A549 (cell line): ENCODE measurements at regions of chr11 and their contacts with region 1.

Region 1: DNA sequence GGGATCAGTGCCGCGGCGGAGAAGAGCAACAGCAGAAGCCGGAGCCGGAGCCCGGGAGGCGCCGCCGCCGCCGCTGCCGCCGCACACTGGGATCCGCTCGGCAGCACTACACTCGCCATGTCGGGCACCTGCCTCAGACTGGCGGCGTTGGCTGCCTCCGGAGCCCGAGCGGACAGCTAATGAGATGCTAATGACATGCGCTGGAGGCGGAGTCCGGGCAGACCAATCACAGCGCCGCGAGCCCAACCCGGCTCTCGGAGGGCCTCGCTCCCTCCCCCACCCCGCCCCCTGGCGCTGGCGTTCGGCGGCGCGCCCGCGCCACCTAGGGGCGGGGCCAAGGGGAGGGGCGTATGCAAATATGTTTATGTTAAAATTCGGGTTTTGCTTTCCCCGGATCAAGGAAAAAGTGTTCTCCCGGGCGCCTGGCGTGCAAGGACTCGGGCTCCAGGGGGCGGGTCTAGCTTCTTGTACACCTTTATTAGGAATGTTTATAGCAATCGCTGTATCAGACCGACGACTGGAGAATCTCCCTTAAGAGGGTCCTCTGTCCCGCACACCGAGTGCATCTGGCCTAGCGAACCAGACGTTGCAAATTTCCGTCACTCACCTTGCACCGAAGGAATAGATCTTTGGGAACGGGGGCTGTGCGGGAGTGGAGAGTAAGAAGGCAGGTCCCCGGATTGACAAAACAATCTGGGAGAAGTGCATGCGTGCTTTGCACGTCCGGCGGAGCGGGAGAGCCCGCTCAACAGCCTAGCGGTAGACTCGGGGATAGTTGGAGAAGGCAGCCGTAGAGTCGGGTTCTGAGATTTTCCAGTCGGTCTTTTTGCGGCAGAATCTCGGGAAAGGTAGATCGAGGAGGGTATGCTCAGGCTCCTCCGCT is at the start of gene CADM1:
- DNase-seq: peak; percentile 70 to 92
- ATAC-seq: peak; percentile 89 to 95
- H3K4me3 ChIP-seq: peak within 1 kb of the TSS; percentile 92
- H3K27ac ChIP-seq: peak within 1 kb of the TSS; percentile 86 to 95
- H3K4me1 ChIP-seq: peaks cover 12% of the 10 kb centered on the region; the same call in 2 of the 3 replicates
- CTCF ChIP-seq: peak; percentile 13
- EP300 ChIP-seq: no peak
- POLR2A ChIP-seq: peak; percentile 93
- RAD21 ChIP-seq: peak; percentile 10 to 32; a peak in 3 of 5 replicates
- polyA plus RNA-seq, gene CADM1: 36.7 and 59.0 TPM in 2 replicates

Region 2: DNA sequence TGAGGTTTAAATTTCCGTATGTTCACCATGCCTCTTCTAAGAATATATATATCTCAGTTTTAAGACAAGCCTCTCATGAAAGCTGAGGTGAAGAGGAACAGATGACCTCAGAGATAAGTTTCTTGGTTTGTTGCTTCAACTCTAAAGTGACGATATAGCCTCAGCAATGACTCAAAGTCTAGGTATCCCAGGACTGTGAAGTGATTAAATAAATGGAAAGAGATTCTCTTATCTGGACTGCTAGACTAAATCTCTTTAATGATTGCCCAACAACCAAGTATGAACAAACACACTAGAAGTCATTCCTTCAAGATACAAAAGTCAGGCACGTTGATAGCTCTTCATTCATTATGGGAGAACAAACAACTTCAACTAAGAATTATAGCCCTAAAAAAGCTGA is 15.6 kb before region 1 on chr11:
- CTCF ChIA-PET with region 1: interaction called, 3 read pairs
- POLR2A ChIA-PET with region 1: interaction called, 10 read pairs
- DNase-seq: peak; percentile 50 to 87
- ATAC-seq: peak; percentile 96 to 97
- H3K4me3 ChIP-seq: no peak overlapping the region; the same call in 2 of the 3 replicates
- H3K27ac ChIP-seq: peak overlapping the region; percentile 76 to 89
- H3K4me1 ChIP-seq: peaks cover 53% of the 10 kb centered on the region
- CTCF ChIP-seq: no peak
- EP300 ChIP-seq: peak; percentile 83 to 85; a peak in 4 of 5 replicates
- POLR2A ChIP-seq: no peak
- RAD21 ChIP-seq: peak in 1 of 2 experiments; percentile 43; a peak in 1 of 5 replicates

Region 3: DNA sequence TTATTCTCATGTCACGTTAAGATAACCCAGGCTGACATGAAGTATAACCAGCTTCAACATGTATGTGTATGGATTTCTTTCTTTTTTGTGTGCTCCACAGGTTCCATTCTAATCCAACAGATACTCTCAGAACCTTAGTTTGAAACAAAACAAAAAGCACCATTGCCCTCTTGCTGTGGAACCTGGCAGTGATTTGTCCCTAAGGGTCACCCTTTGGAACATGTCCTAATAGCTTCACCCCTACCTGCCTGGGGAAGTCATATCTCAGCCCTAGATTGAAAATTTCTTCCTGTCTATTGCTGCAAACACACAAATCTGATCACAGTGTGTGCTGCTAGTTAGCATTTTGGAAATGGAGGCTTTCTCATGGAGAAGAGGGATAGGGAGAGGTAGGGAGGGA is 11.1 kb after region 1 on chr11:
- CTCF ChIA-PET with region 1: interaction called, 14 read pairs
- POLR2A ChIA-PET with region 1: no interaction called
- DNase-seq: no peak
- ATAC-seq: no peak
- H3K4me3 ChIP-seq: no peak overlapping the region
- H3K27ac ChIP-seq: no peak overlapping the region
- H3K4me1 ChIP-seq: no peaks in the 10 kb centered on the region
- CTCF ChIP-seq: no peak
- EP300 ChIP-seq: no peak
- POLR2A ChIP-seq: no peak
- RAD21 ChIP-seq: no peak